CD4-positive, alpha-beta memory T cell (primary cell): ENCODE measurements at regions of chr5 and their contacts with region 1.

Region 1: DNA sequence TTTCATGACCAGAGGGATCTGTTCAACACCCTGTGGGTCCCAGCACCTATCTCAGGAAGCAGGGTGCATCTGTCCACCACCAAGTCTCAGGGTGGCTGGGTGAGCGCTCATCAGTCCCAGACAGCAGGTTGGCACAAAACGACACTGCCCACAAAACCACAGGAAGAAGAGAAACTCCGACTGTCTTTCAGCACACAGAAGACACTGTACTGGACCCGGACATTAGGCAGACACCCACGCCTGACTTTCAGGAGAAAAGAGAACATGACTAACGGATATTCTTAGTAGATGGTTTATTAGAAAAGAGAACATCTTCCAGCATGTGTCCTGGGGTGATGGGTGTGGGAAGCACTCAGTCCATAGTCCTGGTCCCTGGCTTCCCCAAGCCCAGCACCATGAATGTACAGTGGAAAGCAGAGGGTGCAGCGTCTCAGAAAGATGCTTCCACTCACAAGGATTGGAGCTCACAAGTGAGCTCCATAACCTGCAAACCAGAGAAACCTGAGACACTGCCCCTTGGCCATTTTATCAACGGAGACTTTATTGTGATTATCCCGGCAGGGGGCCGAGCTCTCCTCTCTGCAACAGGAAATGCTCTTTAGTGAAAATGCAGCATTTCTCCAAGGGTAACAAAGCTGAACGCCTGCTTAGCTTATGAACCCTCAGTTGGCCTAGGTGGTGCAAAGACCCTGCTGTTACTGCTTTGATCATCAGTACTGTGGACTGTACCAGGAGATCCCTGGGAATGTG is 35.8 kb upstream of the LCP2 start:
- DNase-seq: peak; percentile 55 to 88 (median 61)
- H3K4me3 ChIP-seq: peak overlapping the region in 1 of 2 donors; percentile 39
- H3K4me3 Mint-ChIP-seq: peak overlapping the region in 6 of 8 donors; percentile 71 to 90 (median 84)
- H3K27ac ChIP-seq: peak overlapping the region; percentile 94
- H3K27ac Mint-ChIP-seq: no peak overlapping the region
- H3K4me1 ChIP-seq: peaks cover 99% of the 10 kb centered on the region
- H3K4me1 Mint-ChIP-seq: peaks cover 0 to 59% (median 30%) of the 10 kb centered on the region in 4 donors
- H3K27me3 ChIP-seq: no peaks in the 10 kb centered on the region
- H3K27me3 Mint-ChIP-seq: peaks cover 0 to 2% of the 10 kb centered on the region in 2 donors

Region 2: DNA sequence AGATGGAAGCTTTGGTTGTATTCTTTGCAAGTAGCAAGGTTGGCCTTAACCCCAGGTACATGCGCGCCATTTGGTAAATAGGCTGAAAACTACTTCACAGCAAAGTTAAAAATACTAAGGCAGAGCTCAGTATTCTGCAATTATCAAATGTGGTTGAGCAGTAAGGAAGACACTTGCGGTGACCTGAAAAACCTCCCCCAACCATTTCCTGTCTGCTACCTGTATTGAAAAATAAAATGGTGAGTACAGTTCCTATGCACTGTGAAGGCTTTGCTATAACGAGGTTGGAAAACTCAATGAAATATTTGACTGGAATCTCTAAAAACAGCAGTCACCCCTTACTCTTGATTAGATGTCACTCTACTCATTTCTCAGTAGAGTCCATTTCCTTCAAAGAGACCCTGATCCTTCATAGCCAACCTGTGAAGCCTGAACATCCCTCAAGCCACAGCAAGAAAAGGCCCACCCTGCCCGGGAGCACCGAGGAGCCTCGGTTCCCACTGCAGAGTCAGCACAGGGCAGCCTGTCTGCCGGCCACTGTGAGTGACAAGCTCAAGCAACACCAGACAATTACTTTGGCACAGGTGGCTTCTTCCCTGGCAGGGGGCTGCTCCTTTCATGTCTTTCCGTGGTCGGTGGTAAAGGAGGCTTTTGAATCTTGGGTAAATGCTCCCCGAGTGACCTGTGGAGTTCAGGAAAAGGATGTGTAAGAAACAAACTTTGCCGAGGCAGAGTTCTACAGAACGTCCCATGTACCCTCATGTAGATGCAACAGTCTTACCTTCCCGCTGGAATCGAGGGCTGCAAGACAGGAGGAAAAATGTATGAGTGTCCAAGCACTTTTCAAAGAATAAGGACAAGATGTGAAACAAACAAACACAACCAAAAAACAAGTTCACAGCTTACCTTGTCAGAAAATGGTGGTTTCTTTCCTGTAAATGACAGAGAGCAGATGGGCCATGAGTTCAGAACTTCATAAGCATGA is 71.0 kb before region 1 on chr5:
- CTCF ChIA-PET with region 1: interaction called, 200 read pairs
- POLR2A ChIA-PET with region 1: interaction called, 148 read pairs
- intact Hi-C with region 1: no loop called
- DNase-seq: peak; percentile 77 to 85 (median 80)
- H3K4me3 ChIP-seq: peak overlapping the region; percentile 4 to 28
- H3K4me3 Mint-ChIP-seq: peak overlapping the region; percentile 59 to 82 (median 72)
- H3K27ac ChIP-seq: peak overlapping the region; percentile 67
- H3K27ac Mint-ChIP-seq: peak overlapping the region; percentile 82 to 98 (median 95)
- H3K4me1 ChIP-seq: peaks cover 80% of the 10 kb centered on the region
- H3K4me1 Mint-ChIP-seq: peaks cover 51 to 89% (median 74%) of the 10 kb centered on the region in 4 donors
- H3K27me3 ChIP-seq: no peaks in the 10 kb centered on the region
- H3K27me3 Mint-ChIP-seq: no peaks in the 10 kb centered on the region

Region 3: DNA sequence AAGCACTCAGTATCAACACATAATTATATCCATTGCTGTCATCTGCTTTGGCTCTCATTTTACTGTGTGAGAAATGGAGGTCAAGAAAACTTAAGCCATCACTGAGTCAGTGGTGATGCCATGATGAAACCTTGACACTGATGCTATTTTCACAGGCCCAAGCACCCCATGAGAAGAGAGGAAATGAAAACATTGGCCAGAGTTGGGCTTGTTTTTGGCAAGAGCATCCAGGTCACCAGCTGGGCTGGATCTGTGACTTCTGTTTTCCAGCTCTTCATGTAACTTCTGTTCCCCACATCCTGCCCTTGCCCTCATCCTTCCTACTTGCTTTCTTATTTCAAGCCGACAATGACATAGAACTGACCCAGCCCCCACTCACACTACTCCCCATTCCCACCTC is 45.8 kb before region 1 on chr5:
- CTCF ChIA-PET with region 1: interaction called, 258 read pairs
- POLR2A ChIA-PET with region 1: interaction called, 664 read pairs
- intact Hi-C with region 1: no loop called
- DNase-seq: no peak
- H3K4me3 ChIP-seq: no peak overlapping the region
- H3K4me3 Mint-ChIP-seq: peak overlapping the region in 7 of 8 donors; percentile 22 to 99 (median 73)
- H3K27ac ChIP-seq: peak overlapping the region; percentile 49
- H3K27ac Mint-ChIP-seq: peak overlapping the region; percentile 80 to 100 (median 90)
- H3K4me1 ChIP-seq: peaks cover 99% of the 10 kb centered on the region
- H3K4me1 Mint-ChIP-seq: peaks cover 91 to 100% (median 96%) of the 10 kb centered on the region in 4 donors
- H3K27me3 ChIP-seq: no peaks in the 10 kb centered on the region
- H3K27me3 Mint-ChIP-seq: no peaks in the 10 kb centered on the region

Region 4: GRCh38 chr5:170302653-170303501 is 30.5 kb before region 1 on chr5:
- CTCF ChIA-PET with region 1: interaction called, 258 read pairs
- POLR2A ChIA-PET with region 1: interaction called, 664 read pairs
- intact Hi-C with region 1: loop called (anchors 1 kb)
- DNase-seq: peak; percentile 85 to 91 (median 88)
- H3K4me3 ChIP-seq: peak overlapping the region; percentile 50 to 63
- H3K4me3 Mint-ChIP-seq: peak overlapping the region; percentile 77 to 97 (median 88)
- H3K27ac ChIP-seq: peak overlapping the region; percentile 82
- H3K27ac Mint-ChIP-seq: peak overlapping the region; percentile 88 to 99 (median 97)
- H3K4me1 ChIP-seq: peaks cover 69% of the 10 kb centered on the region
- H3K4me1 Mint-ChIP-seq: peaks cover 39 to 87% (median 67%) of the 10 kb centered on the region in 4 donors
- H3K27me3 ChIP-seq: no peaks in the 10 kb centered on the region
- H3K27me3 Mint-ChIP-seq: no peaks in the 10 kb centered on the region

Region 5: DNA sequence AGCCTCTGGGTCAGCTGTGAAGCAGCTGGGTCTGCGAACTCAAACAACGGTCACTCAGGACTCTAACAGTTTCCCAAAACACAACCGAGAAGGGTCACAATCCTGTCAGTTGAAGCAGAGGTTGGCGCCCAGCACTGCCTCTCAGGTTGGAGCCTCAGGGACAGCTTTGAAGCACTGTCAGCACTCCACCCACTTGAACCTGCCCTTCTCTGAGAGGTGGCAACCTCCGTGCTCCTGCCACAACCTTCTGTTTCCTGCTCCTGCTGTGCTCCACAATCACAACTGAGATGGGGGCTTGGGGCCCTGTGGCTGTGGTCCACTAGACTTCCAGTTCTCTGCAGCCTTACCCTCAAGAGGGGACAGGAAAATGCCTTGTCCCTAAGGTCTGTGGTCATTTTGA is 14.0 kb before region 1 on chr5:
- CTCF ChIA-PET with region 1: interaction called, 18 read pairs
- POLR2A ChIA-PET with region 1: interaction called, 73 read pairs
- intact Hi-C with region 1: no loop called
- DNase-seq: no peak
- H3K4me3 ChIP-seq: no peak overlapping the region
- H3K4me3 Mint-ChIP-seq: peak overlapping the region in 3 of 8 donors; percentile 10 to 46 (median 43)
- H3K27ac ChIP-seq: no peak overlapping the region
- H3K27ac Mint-ChIP-seq: peak overlapping the region in 1 of 7 donors; percentile 48
- H3K4me1 ChIP-seq: peaks cover 14% of the 10 kb centered on the region
- H3K4me1 Mint-ChIP-seq: peaks cover 12 to 32% (median 21%) of the 10 kb centered on the region in 4 donors
- H3K27me3 ChIP-seq: no peaks in the 10 kb centered on the region
- H3K27me3 Mint-ChIP-seq: no peaks in the 10 kb centered on the region